Cardiac septum (tissue), 1 donor: ENCODE measurements at regions of chr3 and their contacts with region 1.

Region 1: GRCh38 chr3:4978204-4978965 is 852 bp upstream of the BHLHE40 start:
- DNase-seq: peak; percentile 99

Region 2: DNA sequence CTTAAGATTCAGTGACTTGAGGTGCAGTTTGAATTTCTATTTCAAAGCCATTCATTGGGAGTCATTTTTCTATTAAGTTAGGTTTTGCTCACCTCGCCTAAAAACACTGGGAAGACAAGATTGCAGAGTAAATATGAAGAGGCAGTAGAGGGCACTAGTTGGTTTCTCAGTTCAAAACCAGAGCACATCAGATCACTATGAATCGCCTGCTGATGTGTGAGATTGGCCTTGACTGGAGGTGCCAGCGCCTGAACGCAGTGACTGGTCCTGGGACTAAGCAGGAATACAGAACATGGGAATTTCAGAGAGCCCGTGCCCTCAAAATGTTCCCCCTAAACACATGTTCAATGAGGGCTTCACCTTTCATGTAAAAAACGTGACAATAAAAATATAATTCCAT is 256.3 kb before region 1 on chr3:
- intact Hi-C with region 1: loop called (anchors 2 kb)
- DNase-seq: no peak

Region 3: GRCh38 chr3:4741404-4742307 is 236.7 kb before region 1 on chr3:
- intact Hi-C with region 1: loop called (anchors 1 kb)
- DNase-seq: no peak

Region 4: GRCh38 chr3:4772171-4772804 is 206.1 kb before region 1 on chr3:
- intact Hi-C with region 1: loop called (anchors 1 kb)
- DNase-seq: peak; percentile 82

Region 5: GRCh38 chr3:4953119-4953518 is 25.3 kb before region 1 on chr3:
- intact Hi-C with region 1: no loop called
- DNase-seq: no peak

Region 6: GRCh38 chr3:5026331-5027218 is 48.2 kb after region 1 on chr3:
- intact Hi-C with region 1: loop called (anchors 1 kb)
- DNase-seq: peak; percentile 94

Region 7: GRCh38 chr3:5057857-5058324 is 79.5 kb after region 1 on chr3:
- intact Hi-C with region 1: loop called (anchors 2 kb)
- DNase-seq: peak; percentile 85